ENCODE measurements at regions of chr1 and their contacts with region 1.

Region 1: DNA sequence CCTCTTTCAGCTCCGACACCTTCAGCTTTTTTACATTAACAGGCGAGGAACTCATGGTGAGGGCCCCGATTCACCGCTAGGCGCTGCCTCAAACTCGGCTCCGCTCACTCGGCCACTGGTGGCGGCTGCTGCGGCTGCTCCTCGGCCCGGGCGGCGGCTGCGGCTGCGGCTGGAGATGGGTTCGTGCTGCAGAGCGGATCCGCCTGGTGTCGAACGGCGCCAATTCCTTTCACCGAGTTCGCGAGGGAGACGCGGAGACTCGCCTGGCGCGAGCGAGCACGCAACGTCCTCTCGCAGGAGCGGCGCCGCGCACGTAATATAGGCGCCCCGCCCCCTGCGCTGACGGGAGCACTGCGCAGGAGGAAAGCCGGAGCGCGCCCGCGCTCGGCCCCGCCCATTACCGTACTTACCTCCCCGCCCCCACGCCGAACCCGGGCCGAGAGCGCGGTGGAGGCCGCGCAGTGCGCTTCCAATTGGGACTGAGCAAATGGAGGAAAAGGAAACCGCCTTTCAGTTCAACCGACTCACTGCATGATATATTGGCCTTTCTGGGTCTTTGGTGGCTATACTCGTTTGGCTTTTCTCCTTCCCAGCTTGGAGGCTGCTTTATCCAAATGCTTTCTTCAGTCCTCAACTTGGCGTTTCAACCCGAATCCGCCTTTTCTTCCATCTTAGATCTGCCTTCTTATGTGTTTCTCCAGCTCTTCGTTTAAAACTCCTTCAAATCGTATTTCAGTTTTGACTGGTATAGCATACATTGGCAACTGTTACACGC is at the start of gene HNRNPU:
- DNase-seq: peak; percentile 90 to 99 (median 95)
- ATAC-seq: peak; percentile 64 to 73 (median 67)
- H3K4me3 ChIP-seq: peak within 1 kb of the TSS; percentile 94 to 99
- H3K4me3 Mint-ChIP-seq: peak within 1 kb of the TSS; percentile 85 to 92 (median 91)
- H3K27ac ChIP-seq: peak within 1 kb of the TSS; percentile 100
- H3K27ac Mint-ChIP-seq: peak within 1 kb of the TSS; percentile 93 to 95
- H3K4me1 ChIP-seq: peaks cover 28 to 29% of the 10 kb centered on the region in 2 experiments
- H3K4me1 Mint-ChIP-seq: peaks cover 45 to 50% (median 49%) of the 10 kb centered on the region in 3 donors
- H3K27me3 ChIP-seq: no peaks in the 10 kb centered on the region
- H3K27me3 Mint-ChIP-seq: no peaks in the 10 kb centered on the region
- total RNA-seq, gene HNRNPU: 302 to 498 (median 321) TPM

Region 2: GRCh38 chr1:244448279-244449036 is 416.0 kb before region 1 on chr1:
- CTCF ChIA-PET with region 1: no interaction called
- POLR2A ChIA-PET with region 1: interaction called in 1 of 2 experiments, 13 read pairs
- DNase-seq: no peak
- ATAC-seq: no peak
- H3K4me3 ChIP-seq: no peak overlapping the region
- H3K4me3 Mint-ChIP-seq: peak overlapping the region in 2 of 3 donors; percentile 15 to 31
- H3K27ac ChIP-seq: no peak overlapping the region
- H3K27ac Mint-ChIP-seq: no peak overlapping the region
- H3K4me1 ChIP-seq: peaks cover 13 to 30% of the 10 kb centered on the region in 2 experiments
- H3K4me1 Mint-ChIP-seq: peaks cover 68 to 71% (median 68%) of the 10 kb centered on the region in 3 donors
- H3K27me3 ChIP-seq: no peaks in the 10 kb centered on the region
- H3K27me3 Mint-ChIP-seq: no peaks in the 10 kb centered on the region

Region 3: GRCh38 chr1:244801246-244801645 is 63.2 kb before region 1 on chr1:
- CTCF ChIA-PET with region 1: interaction called, 3 to 11 read pairs
- POLR2A ChIA-PET with region 1: no interaction called
- DNase-seq: peak; percentile 9 to 77 (median 43)
- ATAC-seq: peak; percentile 82 to 93 (median 89)
- H3K4me3 ChIP-seq: no peak overlapping the region
- H3K4me3 Mint-ChIP-seq: no peak overlapping the region
- H3K27ac ChIP-seq: no peak overlapping the region
- H3K27ac Mint-ChIP-seq: no peak overlapping the region
- H3K4me1 ChIP-seq: peaks cover 0 to 6% of the 10 kb centered on the region in 2 experiments
- H3K4me1 Mint-ChIP-seq: peaks cover 2 to 8% (median 3%) of the 10 kb centered on the region in 3 donors
- H3K27me3 ChIP-seq: peaks cover 0 to 7% of the 10 kb centered on the region in 2 experiments
- H3K27me3 Mint-ChIP-seq: no peaks in the 10 kb centered on the region

Region 4: DNA sequence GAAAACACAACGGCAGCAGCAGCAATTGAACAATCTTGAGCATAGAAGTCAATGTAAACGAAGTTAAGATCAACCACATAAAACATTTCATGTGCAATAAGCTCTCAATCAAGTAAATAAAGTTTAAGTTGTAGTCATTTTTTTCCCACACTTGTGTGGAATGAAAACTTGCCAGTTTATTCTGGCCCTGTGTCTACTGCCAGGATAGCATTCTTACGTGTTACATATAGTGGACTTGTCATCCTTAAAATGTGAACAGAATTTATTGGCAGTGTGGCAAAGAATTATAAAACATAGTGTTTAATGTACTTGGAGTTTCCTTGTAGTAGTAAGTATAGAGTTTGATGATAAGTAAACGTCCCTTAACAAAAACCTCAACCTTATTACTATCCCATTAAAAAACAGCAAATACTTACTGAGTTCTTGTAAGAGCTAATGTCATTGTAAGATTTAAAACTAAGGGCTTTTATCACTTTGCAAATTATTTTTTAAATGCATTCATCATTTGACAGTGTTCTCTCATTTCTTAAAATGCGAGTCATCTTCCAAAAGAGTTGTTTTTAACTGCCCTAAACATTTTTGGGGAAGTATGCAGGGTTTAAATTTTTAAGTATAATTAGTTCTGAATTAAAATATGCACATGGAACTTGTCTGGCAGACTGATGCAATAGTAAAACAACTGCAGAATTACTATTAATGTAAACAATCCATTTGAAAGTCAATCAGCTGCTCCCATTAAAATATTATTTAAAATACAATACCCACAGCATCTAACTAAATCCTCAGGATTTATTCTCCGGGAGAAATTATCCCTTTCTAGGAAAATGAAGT is 21.1 kb before region 1 on chr1:
- CTCF ChIA-PET with region 1: interaction called in 1 of 2 experiments, 16 read pairs
- POLR2A ChIA-PET with region 1: interaction called, 47 to 57 read pairs
- DNase-seq: no peak
- ATAC-seq: no peak
- H3K4me3 ChIP-seq: no peak overlapping the region
- H3K4me3 Mint-ChIP-seq: no peak overlapping the region
- H3K27ac ChIP-seq: no peak overlapping the region
- H3K27ac Mint-ChIP-seq: peak overlapping the region; percentile 36 to 68
- H3K4me1 ChIP-seq: peaks cover 10 to 12% of the 10 kb centered on the region in 2 experiments
- H3K4me1 Mint-ChIP-seq: peaks cover 67 to 75% (median 69%) of the 10 kb centered on the region in 3 donors
- H3K27me3 ChIP-seq: no peaks in the 10 kb centered on the region
- H3K27me3 Mint-ChIP-seq: no peaks in the 10 kb centered on the region

Region 5: DNA sequence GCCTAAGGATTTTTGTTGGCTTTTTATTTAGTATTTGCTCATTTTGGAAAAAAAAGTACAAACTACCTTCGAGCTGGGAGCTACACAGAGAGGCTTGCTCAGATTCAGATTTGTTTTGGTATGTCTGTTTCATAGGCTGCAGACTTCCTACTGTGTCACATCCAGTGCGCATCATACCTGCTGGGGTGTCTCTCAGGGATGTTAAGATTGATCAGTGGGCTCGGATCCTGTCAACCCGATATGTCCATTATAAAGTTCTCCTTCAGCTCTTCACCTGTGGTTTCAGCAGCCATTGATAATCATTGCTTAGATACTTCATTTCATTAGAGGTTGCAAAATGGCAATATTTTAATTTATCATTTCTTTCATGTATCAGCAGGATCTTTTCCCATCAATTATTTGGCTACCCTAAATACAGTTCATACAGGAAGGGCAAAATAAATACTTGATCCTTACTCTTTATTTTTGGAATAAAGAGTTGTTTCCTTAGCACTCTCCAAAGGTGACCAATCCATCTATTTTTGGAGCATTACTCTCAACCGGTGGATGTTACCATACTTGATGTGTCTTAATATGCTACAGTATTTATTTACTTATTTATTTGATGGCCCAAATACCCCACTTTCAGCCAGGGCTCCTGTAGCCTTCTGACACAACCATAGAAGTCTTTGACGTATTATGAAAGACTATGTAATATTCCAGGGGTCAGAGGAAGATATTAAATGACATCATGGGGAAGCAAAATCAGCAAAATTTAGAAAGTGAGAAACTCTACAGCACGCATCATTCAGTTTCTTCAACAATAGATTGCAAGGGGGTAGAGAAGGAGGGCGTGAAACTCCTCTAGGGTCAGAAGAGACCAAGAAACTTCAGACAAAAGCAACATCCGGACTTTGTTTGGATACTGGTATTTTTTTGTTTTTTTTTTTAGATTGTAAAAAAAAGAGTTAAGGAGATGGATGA is 55.2 kb after region 1 on chr1:
- CTCF ChIA-PET with region 1: no interaction called
- POLR2A ChIA-PET with region 1: interaction called in 1 of 2 experiments, 13 read pairs
- DNase-seq: no peak
- ATAC-seq: no peak
- H3K4me3 ChIP-seq: peak overlapping the region; percentile 57 to 77
- H3K4me3 Mint-ChIP-seq: peak overlapping the region; percentile 75 to 90 (median 83)
- H3K27ac ChIP-seq: no peak overlapping the region
- H3K27ac Mint-ChIP-seq: peak overlapping the region in 1 of 2 donors; percentile 44
- H3K4me1 ChIP-seq: peaks cover 6 to 7% of the 10 kb centered on the region in 2 experiments
- H3K4me1 Mint-ChIP-seq: peaks cover 6 to 12% (median 11%) of the 10 kb centered on the region in 3 donors
- H3K27me3 ChIP-seq: peaks cover 0 to 2% of the 10 kb centered on the region in 2 experiments
- H3K27me3 Mint-ChIP-seq: peaks cover 0 to 1% of the 10 kb centered on the region in 2 donors

Region 6: DNA sequence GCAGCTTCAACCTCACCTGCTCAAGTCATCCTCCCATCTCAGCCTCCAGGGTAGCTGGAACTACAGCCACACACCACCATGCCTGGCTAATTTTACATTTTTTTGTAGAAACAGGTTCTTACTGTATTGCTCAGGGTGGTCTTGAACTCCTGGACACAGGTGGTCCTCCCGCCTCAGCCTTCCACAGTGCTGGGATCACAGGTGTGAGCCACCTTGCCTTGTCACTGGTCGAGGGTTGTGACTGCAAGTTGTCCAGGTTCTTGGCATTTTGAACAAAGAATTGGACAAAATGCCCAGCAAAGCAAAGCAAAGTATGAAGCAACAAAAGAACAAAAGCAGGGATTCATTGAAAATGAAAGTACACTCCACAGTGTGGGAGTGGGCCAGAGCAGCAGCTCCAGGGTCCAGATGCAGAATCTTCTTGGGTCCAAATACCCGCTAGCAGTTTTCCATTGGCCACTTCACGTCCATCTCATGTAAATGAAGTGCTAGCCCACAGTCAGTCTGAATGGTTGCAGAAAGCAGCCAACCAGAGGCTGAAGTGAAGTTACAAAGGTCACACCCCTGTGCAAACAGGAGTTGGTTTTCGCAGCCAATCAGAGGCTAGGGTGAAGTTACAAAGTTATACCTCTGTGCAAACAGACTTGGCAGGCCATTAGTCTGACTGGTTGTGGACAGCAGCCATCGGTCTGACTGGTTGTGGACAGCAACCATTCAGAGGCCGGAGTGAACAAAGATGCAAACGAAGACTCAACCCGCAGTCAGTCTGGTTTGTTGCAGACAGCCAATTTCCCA is 180.8 kb after region 1 on chr1:
- CTCF ChIA-PET with region 1: interaction called, 3 to 4 read pairs
- POLR2A ChIA-PET with region 1: interaction called, 4 to 11 read pairs
- DNase-seq: no peak
- ATAC-seq: no peak
- H3K4me3 ChIP-seq: no peak overlapping the region
- H3K4me3 Mint-ChIP-seq: no peak overlapping the region
- H3K27ac ChIP-seq: no peak overlapping the region
- H3K27ac Mint-ChIP-seq: no peak overlapping the region
- H3K4me1 ChIP-seq: no peaks in the 10 kb centered on the region
- H3K4me1 Mint-ChIP-seq: peaks cover 0 to 3% (median 2%) of the 10 kb centered on the region in 3 donors
- H3K27me3 ChIP-seq: no peaks in the 10 kb centered on the region
- H3K27me3 Mint-ChIP-seq: no peaks in the 10 kb centered on the region

Region 7: GRCh38 chr1:245475154-245475553 is 610.7 kb after region 1 on chr1:
- CTCF ChIA-PET with region 1: no interaction called
- POLR2A ChIA-PET with region 1: no interaction called
- DNase-seq: no peak
- ATAC-seq: no peak
- H3K4me3 ChIP-seq: no peak overlapping the region
- H3K4me3 Mint-ChIP-seq: no peak overlapping the region
- H3K27ac ChIP-seq: no peak overlapping the region
- H3K27ac Mint-ChIP-seq: no peak overlapping the region
- H3K4me1 ChIP-seq: no peaks in the 10 kb centered on the region
- H3K4me1 Mint-ChIP-seq: no peaks in the 10 kb centered on the region
- H3K27me3 ChIP-seq: no peaks in the 10 kb centered on the region
- H3K27me3 Mint-ChIP-seq: peaks cover 0 to 7% of the 10 kb centered on the region in 2 donors

Region 8: DNA sequence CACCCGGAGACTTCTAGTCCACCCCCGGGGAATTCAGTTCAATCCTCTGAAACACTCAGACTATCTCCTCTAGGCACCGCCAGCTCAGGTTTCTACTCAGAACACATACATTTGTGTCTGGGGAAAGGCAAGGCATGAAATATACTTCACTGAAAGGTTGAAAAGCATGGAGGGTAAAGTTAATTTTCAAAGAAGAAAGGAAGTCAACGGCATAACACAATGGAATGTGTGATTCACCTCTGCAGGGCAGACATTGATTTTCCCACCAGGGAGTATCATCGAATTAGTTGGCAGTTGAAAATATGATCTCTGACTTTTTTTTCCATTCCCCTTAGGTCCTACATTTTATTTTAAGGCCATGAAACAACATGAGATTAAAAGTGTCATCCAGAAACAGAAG is 973.3 kb after region 1 on chr1:
- CTCF ChIA-PET with region 1: no interaction called
- POLR2A ChIA-PET with region 1: no interaction called
- DNase-seq: no peak
- ATAC-seq: no peak
- H3K4me3 ChIP-seq: no peak overlapping the region
- H3K4me3 Mint-ChIP-seq: no peak overlapping the region
- H3K27ac ChIP-seq: no peak overlapping the region
- H3K27ac Mint-ChIP-seq: no peak overlapping the region
- H3K4me1 ChIP-seq: no peaks in the 10 kb centered on the region
- H3K4me1 Mint-ChIP-seq: no peaks in the 10 kb centered on the region
- H3K27me3 ChIP-seq: no peaks in the 10 kb centered on the region
- H3K27me3 Mint-ChIP-seq: no peaks in the 10 kb centered on the region